GM10248 (cell line): ENCODE measurements at regions of chr6 and their contacts with region 1.

Region 1: GRCh38 chr6:137767911-137768690 is 99.0 kb upstream of the TNFAIP3 start:
- DNase-seq: peak; percentile 52
- CTCF ChIP-seq: no peak

Region 2: GRCh38 chr6:137780447-137781034 is 12.4 kb after region 1 on chr6:
- CTCF ChIA-PET with region 1: interaction called, 10 read pairs
- POLR2A ChIA-PET with region 1: no interaction called
- DNase-seq: no peak
- CTCF ChIP-seq: no peak